ENCODE measurements at regions of chr19 and their contacts with region 1.

Region 1: DNA sequence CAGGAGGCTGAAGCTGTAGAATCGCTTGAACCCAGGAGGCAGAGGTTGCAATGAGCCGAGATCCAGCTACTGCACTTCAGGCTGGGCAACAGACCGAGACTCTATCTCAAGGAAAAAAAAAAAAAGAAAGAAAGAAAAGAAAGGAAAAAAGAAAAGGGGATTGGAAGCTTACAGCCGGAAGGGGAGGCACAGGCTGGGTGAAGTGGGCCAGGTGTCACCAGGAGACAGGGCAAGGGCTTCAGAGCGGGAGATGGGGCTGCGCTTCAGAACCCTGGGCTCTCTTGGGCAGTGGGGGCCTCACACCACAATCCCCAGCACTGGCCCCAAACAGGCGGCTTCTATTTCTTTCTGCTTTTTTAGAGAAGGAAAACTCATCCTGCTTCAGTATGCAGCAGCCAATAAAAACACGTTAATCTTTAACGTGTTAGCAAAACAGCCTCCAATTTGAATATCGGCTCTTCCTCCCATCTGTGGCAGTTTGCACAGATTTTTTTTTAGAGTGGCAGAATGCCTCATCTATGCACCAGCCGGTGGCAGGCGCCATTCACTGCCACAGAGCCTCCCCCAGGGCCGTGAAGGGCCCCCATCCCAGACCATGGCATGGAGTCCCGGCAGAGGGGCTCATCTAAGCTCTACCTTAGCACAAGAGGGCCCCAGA is 46.6 kb upstream of the C19orf12 start:
- DNase-seq: no peak
- H3K4me3 Mint-ChIP-seq: no peak overlapping the region
- H3K27ac Mint-ChIP-seq: no peak overlapping the region
- H3K4me1 Mint-ChIP-seq: peaks cover 3% of the 10 kb centered on the region
- H3K27me3 Mint-ChIP-seq: peaks cover 4% of the 10 kb centered on the region

Region 2: GRCh38 chr19:29735800-29736199 is 25.9 kb before region 1 on chr19:
- CTCF ChIA-PET with region 1: interaction called, 12 read pairs
- POLR2A ChIA-PET with region 1: interaction called, 3 read pairs
- DNase-seq: no peak
- H3K4me3 Mint-ChIP-seq: no peak overlapping the region
- H3K27ac Mint-ChIP-seq: no peak overlapping the region
- H3K4me1 Mint-ChIP-seq: no peaks in the 10 kb centered on the region
- H3K27me3 Mint-ChIP-seq: peaks cover 3% of the 10 kb centered on the region

Region 3: GRCh38 chr19:29811125-29812079 is 49.7 kb after region 1 on chr19 and contains the start of gene CCNE1:
- CTCF ChIA-PET with region 1: interaction called, 14 read pairs
- POLR2A ChIA-PET with region 1: no interaction called
- DNase-seq: peak; percentile 96
- H3K4me3 Mint-ChIP-seq: peak within 1 kb of the TSS; percentile 84
- H3K27ac Mint-ChIP-seq: peak within 1 kb of the TSS; percentile 78
- H3K4me1 Mint-ChIP-seq: peaks cover 29% of the 10 kb centered on the region
- H3K27me3 Mint-ChIP-seq: no peaks in the 10 kb centered on the region
- total RNA-seq, gene CCNE1: 24.8 to 26.3 TPM

Region 4: GRCh38 chr19:29867984-29868383 is 106.3 kb after region 1 on chr19:
- CTCF ChIA-PET with region 1: interaction called, 62 read pairs
- POLR2A ChIA-PET with region 1: no interaction called
- DNase-seq: no peak
- H3K4me3 Mint-ChIP-seq: no peak overlapping the region
- H3K27ac Mint-ChIP-seq: no peak overlapping the region
- H3K4me1 Mint-ChIP-seq: peaks cover 12% of the 10 kb centered on the region
- H3K27me3 Mint-ChIP-seq: peaks cover 35% of the 10 kb centered on the region

Region 5: GRCh38 chr19:29873024-29873800 is 111.5 kb after region 1 on chr19:
- CTCF ChIA-PET with region 1: interaction called, 62 read pairs
- POLR2A ChIA-PET with region 1: no interaction called
- DNase-seq: peak; percentile 67
- H3K4me3 Mint-ChIP-seq: peak overlapping the region; percentile 60
- H3K27ac Mint-ChIP-seq: no peak overlapping the region
- H3K4me1 Mint-ChIP-seq: peaks cover 18% of the 10 kb centered on the region
- H3K27me3 Mint-ChIP-seq: peaks cover 24% of the 10 kb centered on the region

Measured in activated CD4-positive, alpha-beta memory T cell treated with anti-CD3 and anti-CD28 coated beads, Interleukin-2, amount 10 ng/mL, durations not matched to agents 7 days and 5 days (primary cell).